Activated naive CD4-positive, alpha-beta T cell treated with anti-CD3 and anti-CD28 coated beads for 36 hours (primary cell): ENCODE measurements at regions of chr10 and their contacts with region 1.

Region 1: DNA sequence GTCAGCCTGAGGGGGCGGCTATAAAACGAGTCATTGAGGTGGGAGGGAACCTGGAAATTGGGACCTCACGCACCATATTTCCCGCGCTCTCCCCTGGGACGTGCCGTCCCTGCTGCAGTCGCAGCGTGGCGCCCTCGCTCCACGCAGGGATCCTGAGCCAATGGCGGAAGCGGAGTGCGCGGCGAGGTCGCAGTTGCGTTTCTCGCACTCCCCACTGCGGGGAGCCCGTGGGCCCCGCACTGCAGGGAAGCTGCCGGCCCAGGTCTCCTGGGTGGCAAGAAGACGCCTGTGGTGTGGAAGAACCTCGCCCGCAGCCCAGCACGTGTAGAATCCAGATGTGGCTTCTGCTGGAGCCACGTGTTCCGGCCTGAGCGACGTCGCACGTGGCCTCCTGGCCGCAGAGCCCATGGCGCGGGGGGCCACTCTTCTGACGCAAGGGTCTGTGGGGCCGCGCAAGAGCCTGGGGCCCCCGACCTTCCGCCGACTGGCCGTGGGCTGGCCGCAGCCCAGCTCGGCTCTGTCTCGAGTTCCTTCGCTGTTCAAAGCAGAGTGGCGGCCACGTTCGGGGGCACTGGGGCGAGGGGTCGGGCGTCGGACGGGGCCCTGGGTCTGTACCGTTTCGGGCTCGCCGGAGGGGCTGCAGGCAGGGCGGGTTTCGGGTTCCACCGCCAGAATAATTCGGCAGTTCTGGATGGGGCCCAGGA is 26.4 kb downstream of the HIF1AN start:
- DNase-seq: peak; percentile 85
- H3K4me3 Mint-ChIP-seq: no peak overlapping the region
- H3K27ac Mint-ChIP-seq: no peak overlapping the region
- H3K4me1 Mint-ChIP-seq: peaks cover 9% of the 10 kb centered on the region
- H3K27me3 Mint-ChIP-seq: peaks cover 20% of the 10 kb centered on the region

Region 2: GRCh38 chr10:100653957-100654781 is 92.0 kb after region 1 on chr10:
- CTCF ChIA-PET with region 1: interaction called, 4 read pairs
- intact Hi-C with region 1: loop called (anchors 1 kb)
- DNase-seq: peak; percentile 71
- H3K4me3 Mint-ChIP-seq: peak overlapping the region; percentile 71
- H3K27ac Mint-ChIP-seq: no peak overlapping the region
- H3K4me1 Mint-ChIP-seq: peaks cover 23% of the 10 kb centered on the region
- H3K27me3 Mint-ChIP-seq: peaks cover 61% of the 10 kb centered on the region

Region 3: GRCh38 chr10:100817268-100817839 is 255.2 kb after region 1 on chr10:
- CTCF ChIA-PET with region 1: no interaction called
- intact Hi-C with region 1: no loop called
- DNase-seq: no peak
- H3K4me3 Mint-ChIP-seq: no peak overlapping the region
- H3K27ac Mint-ChIP-seq: no peak overlapping the region
- H3K4me1 Mint-ChIP-seq: no peaks in the 10 kb centered on the region
- H3K27me3 Mint-ChIP-seq: peaks cover 32% of the 10 kb centered on the region

Region 4: GRCh38 chr10:100827819-100828737 is 265.9 kb after region 1 on chr10:
- CTCF ChIA-PET with region 1: no interaction called
- intact Hi-C with region 1: loop called (anchors 1 kb)
- DNase-seq: peak; percentile 50
- H3K4me3 Mint-ChIP-seq: peak overlapping the region; percentile 66
- H3K27ac Mint-ChIP-seq: no peak overlapping the region
- H3K4me1 Mint-ChIP-seq: peaks cover 19% of the 10 kb centered on the region
- H3K27me3 Mint-ChIP-seq: peaks cover 74% of the 10 kb centered on the region

Region 5: GRCh38 chr10:100878291-100878910 is 316.2 kb after region 1 on chr10:
- CTCF ChIA-PET with region 1: interaction called, 6 read pairs
- intact Hi-C with region 1: loop called (anchors 1 kb)
- DNase-seq: peak; percentile 64
- H3K4me3 Mint-ChIP-seq: no peak overlapping the region
- H3K27ac Mint-ChIP-seq: no peak overlapping the region
- H3K4me1 Mint-ChIP-seq: no peaks in the 10 kb centered on the region
- H3K27me3 Mint-ChIP-seq: peaks cover 10% of the 10 kb centered on the region